A549 (cell line): ENCODE measurements at regions of chr7 and their contacts with region 1.

Region 1: GRCh38 chr7:36291387-36292316 is 98.0 kb upstream of the ANLN start:
- DNase-seq: peak; percentile 81 to 87
- ATAC-seq: peak; percentile 81 to 89
- H3K4me3 ChIP-seq: peak overlapping the region; percentile 18; the same call in 1 of the 3 replicates
- H3K27ac ChIP-seq: peak overlapping the region; percentile 82 to 91
- H3K4me1 ChIP-seq: peaks cover 54% of the 10 kb centered on the region
- CTCF ChIP-seq: peak; percentile 98
- EP300 ChIP-seq: no peak
- POLR2A ChIP-seq: no peak
- RAD21 ChIP-seq: peak; percentile 100

Region 2: GRCh38 chr7:35985126-35985754 is 306.4 kb before region 1 on chr7:
- CTCF ChIA-PET with region 1: interaction called, 198 read pairs
- POLR2A ChIA-PET with region 1: interaction called, 6 read pairs
- DNase-seq: peak; percentile 71 to 77
- ATAC-seq: peak; percentile 96 to 99
- H3K4me3 ChIP-seq: no peak overlapping the region
- H3K27ac ChIP-seq: peak overlapping the region; percentile 54 to 75; a peak in 4 of 6 replicates
- H3K4me1 ChIP-seq: peaks cover 3% of the 10 kb centered on the region; the same call in 1 of the 3 replicates
- CTCF ChIP-seq: peak; percentile 92
- EP300 ChIP-seq: no peak
- POLR2A ChIP-seq: no peak
- RAD21 ChIP-seq: peak; percentile 100

Region 3: DNA sequence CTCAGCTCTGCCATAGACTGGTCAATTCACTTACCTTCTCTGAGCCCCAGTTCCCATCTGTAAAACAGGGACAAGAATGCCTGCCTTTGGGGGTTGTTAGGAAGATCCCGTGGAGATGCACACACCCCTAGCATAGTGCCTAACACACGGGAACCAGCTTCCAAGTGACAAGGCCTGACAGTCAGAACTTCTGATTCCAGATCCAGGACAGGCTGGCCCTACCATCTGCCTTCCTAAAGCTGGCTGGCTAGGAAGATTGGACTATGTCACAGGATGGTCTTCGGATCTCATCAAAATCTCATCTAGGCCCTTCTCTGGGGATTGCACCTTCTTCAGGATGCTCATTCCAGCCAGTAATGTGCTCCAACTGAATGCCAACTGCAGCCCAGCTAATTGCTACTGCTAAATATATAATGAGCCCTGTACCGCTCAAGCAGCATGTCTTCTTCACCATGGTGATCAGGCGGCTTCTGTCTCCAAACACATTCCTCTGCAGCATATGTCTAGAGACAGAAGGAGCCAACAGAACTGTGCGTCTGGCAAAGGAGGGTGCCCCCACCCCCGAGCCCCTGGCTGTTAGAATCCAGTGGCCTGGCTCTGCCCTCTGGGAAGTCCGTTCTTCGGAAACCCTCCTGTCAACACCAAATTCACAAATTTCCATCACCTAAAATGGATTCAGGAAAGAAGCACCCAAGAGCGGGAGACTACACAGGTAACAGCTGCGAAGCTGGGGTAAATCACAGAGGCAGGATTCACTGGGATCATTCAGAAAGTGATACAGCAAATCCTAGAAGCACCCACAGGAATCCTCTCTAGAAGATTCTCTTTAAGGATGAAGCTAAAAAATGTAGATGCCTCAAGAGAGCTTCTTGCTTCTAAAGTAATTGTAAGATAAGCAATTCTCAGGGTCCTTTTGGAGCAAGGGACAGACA is 280.7 kb before region 1 on chr7:
- CTCF ChIA-PET with region 1: interaction called, 16 read pairs
- POLR2A ChIA-PET with region 1: no interaction called
- DNase-seq: no peak
- ATAC-seq: no peak
- H3K4me3 ChIP-seq: no peak overlapping the region
- H3K27ac ChIP-seq: no peak overlapping the region
- H3K4me1 ChIP-seq: 0 out of 3 replicates have a peak, but pooled peaks cover under 1% of the 10 kb centered on the region
- CTCF ChIP-seq: no peak
- EP300 ChIP-seq: no peak
- POLR2A ChIP-seq: no peak
- RAD21 ChIP-seq: no peak

Region 4: DNA sequence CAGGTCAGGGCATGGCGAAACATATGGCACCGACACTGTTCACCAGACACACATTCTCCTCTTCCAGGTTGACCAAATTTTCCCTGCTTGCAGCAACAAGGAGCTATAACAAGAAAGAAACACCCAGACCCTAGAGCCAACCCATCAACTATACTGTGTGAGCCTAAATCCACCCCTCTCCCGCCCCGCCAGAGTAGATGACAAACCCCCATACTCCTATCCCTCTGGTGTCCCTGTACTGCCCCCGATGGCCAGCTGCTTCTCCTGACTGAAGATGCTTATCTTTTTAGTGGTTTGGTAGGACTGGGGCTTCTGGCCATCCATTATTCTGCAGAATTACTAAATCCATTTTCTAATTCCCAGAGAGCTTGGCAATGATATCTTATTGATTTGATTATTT is 208.7 kb before region 1 on chr7:
- CTCF ChIA-PET with region 1: interaction called, 12 read pairs
- POLR2A ChIA-PET with region 1: interaction called, 3 read pairs
- DNase-seq: peak in 1 of 2 experiments; percentile 6
- ATAC-seq: no peak
- H3K4me3 ChIP-seq: no peak overlapping the region
- H3K27ac ChIP-seq: no peak overlapping the region
- H3K4me1 ChIP-seq: peaks cover 13% of the 10 kb centered on the region; the same call in 1 of the 3 replicates
- CTCF ChIP-seq: no peak
- EP300 ChIP-seq: no peak
- POLR2A ChIP-seq: no peak
- RAD21 ChIP-seq: no peak

Region 5: DNA sequence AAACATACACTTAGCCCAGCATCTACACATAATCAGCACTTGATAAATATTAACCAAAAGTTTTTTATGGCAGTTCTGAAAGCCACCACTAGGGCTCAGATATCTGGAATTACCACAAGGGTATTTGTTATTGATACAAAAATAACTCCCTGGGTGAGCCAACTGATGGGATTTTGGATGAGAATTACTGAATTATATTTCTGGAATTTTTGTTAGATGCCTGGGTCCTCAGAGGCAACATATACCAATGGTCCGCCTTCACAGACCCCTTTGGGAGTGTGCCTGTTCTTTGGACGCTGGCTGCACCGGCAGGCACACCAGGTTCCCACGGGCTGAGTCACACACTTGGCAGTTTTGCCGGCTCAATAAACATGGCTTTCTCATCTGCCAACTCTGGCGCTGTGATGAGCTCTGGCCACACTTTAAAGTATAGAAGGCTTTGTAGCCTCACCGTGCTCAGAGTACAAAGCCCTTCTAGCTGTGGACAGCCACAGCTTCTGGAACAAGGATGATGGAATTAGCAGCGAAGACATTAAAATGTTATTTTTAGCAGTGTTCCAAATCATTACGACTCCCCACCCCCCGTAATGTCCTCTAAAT is 163.1 kb before region 1 on chr7:
- CTCF ChIA-PET with region 1: interaction called, 11 read pairs
- POLR2A ChIA-PET with region 1: interaction called, 3 read pairs
- DNase-seq: peak; percentile 77 to 90
- ATAC-seq: peak; percentile 95 to 97
- H3K4me3 ChIP-seq: peak overlapping the region; percentile 37
- H3K27ac ChIP-seq: peak overlapping the region; percentile 82 to 88
- H3K4me1 ChIP-seq: peaks cover 31% of the 10 kb centered on the region
- CTCF ChIP-seq: peak; percentile 72
- EP300 ChIP-seq: no peak
- POLR2A ChIP-seq: no peak
- RAD21 ChIP-seq: peak; percentile 32 to 47

Region 6: GRCh38 chr7:36280840-36281812 is 10.5 kb before region 1 on chr7:
- CTCF ChIA-PET with region 1: interaction called, 105 read pairs
- POLR2A ChIA-PET with region 1: no interaction called
- DNase-seq: peak; percentile 76 to 85
- ATAC-seq: peak; percentile 91 to 92
- H3K4me3 ChIP-seq: peak overlapping the region; percentile 39
- H3K27ac ChIP-seq: peak overlapping the region; percentile 94 to 95
- H3K4me1 ChIP-seq: peaks cover 70% of the 10 kb centered on the region
- CTCF ChIP-seq: no peak
- EP300 ChIP-seq: 0 out of 5 replicates have a peak, but pooled peaks of 1 of the 2 experiments have one; percentile 35
- POLR2A ChIP-seq: no peak
- RAD21 ChIP-seq: peak in 1 of 2 experiments; percentile 38; a peak in 1 of 5 replicates

Region 7: DNA sequence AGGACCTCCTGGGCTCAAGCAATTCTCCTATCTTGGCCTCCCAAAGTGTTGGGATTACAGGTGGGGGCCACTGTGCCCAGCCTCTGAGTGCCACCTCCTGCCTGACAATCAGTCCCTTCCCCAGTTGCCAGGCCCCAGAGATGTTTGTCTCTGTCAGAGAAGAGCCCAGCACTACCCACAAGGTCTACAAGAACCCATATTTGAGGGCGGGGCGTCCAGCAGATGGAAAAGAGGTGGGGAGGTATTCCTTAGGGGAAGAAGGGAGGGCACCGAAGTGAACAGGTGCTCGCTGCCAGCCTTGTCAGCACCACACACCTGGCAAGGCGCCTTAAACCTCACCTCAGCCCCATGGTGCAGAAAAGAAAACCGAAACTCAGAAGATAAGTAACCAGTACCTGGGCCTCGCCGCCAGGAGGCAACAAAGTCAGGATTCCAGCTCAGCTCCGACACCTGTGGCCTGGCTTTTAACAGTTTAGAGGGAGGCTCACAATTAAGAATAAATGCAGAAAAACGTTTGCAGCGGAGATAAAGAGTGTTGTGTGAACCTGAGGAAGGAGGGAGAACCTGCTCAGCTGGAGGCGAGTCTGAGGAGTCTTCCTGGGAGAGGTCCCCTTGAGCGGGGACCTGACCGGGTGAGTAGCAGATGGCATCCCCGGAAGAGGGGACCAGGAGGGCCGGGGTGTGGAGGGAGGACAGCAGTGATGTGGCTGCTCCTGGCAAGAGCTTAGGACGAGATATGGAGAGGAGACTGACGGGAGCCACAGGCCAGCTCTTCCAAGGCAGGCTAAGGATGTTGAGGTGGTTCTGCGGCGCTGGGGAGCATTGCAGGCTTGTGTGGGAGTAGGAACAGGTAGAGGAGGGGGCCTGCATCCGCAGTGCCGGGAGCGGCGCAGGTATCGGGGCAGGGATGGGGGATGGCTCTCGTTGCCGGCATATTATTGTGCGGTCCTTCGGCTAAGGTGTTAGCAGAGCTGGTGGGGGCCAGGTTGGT is 21.0 kb after region 1 on chr7:
- CTCF ChIA-PET with region 1: interaction called, 82 read pairs
- POLR2A ChIA-PET with region 1: no interaction called
- DNase-seq: peak in 1 of 2 experiments; percentile 37
- ATAC-seq: peak; percentile 67 to 81; a peak in 3 of 6 replicates
- H3K4me3 ChIP-seq: no peak overlapping the region
- H3K27ac ChIP-seq: no peak overlapping the region
- H3K4me1 ChIP-seq: no peaks in the 10 kb centered on the region
- CTCF ChIP-seq: peak; percentile 31; the same call in 2 of the 3 replicates
- EP300 ChIP-seq: no peak
- POLR2A ChIP-seq: no peak
- RAD21 ChIP-seq: peak in 1 of 2 experiments; percentile 29; a peak in 1 of 5 replicates

Region 8: GRCh38 chr7:36389371-36390198 is 97.9 kb after region 1 on chr7 and contains the start of gene ANLN:
- CTCF ChIA-PET with region 1: no interaction called
- POLR2A ChIA-PET with region 1: no interaction called
- DNase-seq: peak; percentile 93 to 95
- ATAC-seq: peak; percentile 84 to 86
- H3K4me3 ChIP-seq: peak within 1 kb of the TSS; percentile 67
- H3K27ac ChIP-seq: peak within 1 kb of the TSS; percentile 88 to 94
- H3K4me1 ChIP-seq: peaks cover 46% of the 10 kb centered on the region
- CTCF ChIP-seq: no peak
- EP300 ChIP-seq: no peak
- POLR2A ChIP-seq: peak; percentile 41
- RAD21 ChIP-seq: no peak
- polyA plus RNA-seq, gene ANLN: 52.4 and 148 TPM in 2 replicates

Region 9: GRCh38 chr7:36784991-36785940 is 493.6 kb after region 1 on chr7:
- CTCF ChIA-PET with region 1: no interaction called
- POLR2A ChIA-PET with region 1: no interaction called
- DNase-seq: no peak
- ATAC-seq: no peak
- H3K4me3 ChIP-seq: no peak overlapping the region
- H3K27ac ChIP-seq: no peak overlapping the region
- H3K4me1 ChIP-seq: no peaks in the 10 kb centered on the region
- CTCF ChIP-seq: no peak
- EP300 ChIP-seq: no peak
- POLR2A ChIP-seq: no peak
- RAD21 ChIP-seq: no peak